Activated CD8-positive, alpha-beta T cell treated with anti-CD3 and anti-CD28 coated beads for 36 hours (primary cell): ENCODE measurements at regions of chr2 and their contacts with region 1.

Region 1: GRCh38 chr2:106572541-106573450 is 85.6 kb downstream of the CD8B2 start:
- DNase-seq: peak; percentile 53
- ATAC-seq: peak; percentile 60
- H3K4me3 Mint-ChIP-seq: no peak overlapping the region
- H3K27ac Mint-ChIP-seq: no peak overlapping the region
- H3K4me1 Mint-ChIP-seq: no peaks in the 10 kb centered on the region
- H3K27me3 Mint-ChIP-seq: peaks cover 5% of the 10 kb centered on the region
- CTCF ChIP-seq: peak; percentile 71

Region 2: GRCh38 chr2:106098081-106098480 is 474.7 kb before region 1 on chr2:
- CTCF ChIA-PET with region 1: no interaction called
- POLR2A ChIA-PET with region 1: no interaction called
- intact Hi-C with region 1: loop called (anchors 10 kb)
- DNase-seq: peak; percentile 57
- ATAC-seq: no peak
- H3K4me3 Mint-ChIP-seq: no peak overlapping the region
- H3K27ac Mint-ChIP-seq: peak overlapping the region; percentile 21
- H3K4me1 Mint-ChIP-seq: peaks cover 43% of the 10 kb centered on the region
- H3K27me3 Mint-ChIP-seq: no peaks in the 10 kb centered on the region
- CTCF ChIP-seq: peak; percentile 46

Region 3: GRCh38 chr2:106523976-106524665 is 48.7 kb before region 1 on chr2:
- CTCF ChIA-PET with region 1: no interaction called
- POLR2A ChIA-PET with region 1: no interaction called
- intact Hi-C with region 1: no loop called
- DNase-seq: no peak
- ATAC-seq: no peak
- H3K4me3 Mint-ChIP-seq: no peak overlapping the region
- H3K27ac Mint-ChIP-seq: no peak overlapping the region
- H3K4me1 Mint-ChIP-seq: no peaks in the 10 kb centered on the region
- H3K27me3 Mint-ChIP-seq: peaks cover 5% of the 10 kb centered on the region
- CTCF ChIP-seq: no peak

Region 4: DNA sequence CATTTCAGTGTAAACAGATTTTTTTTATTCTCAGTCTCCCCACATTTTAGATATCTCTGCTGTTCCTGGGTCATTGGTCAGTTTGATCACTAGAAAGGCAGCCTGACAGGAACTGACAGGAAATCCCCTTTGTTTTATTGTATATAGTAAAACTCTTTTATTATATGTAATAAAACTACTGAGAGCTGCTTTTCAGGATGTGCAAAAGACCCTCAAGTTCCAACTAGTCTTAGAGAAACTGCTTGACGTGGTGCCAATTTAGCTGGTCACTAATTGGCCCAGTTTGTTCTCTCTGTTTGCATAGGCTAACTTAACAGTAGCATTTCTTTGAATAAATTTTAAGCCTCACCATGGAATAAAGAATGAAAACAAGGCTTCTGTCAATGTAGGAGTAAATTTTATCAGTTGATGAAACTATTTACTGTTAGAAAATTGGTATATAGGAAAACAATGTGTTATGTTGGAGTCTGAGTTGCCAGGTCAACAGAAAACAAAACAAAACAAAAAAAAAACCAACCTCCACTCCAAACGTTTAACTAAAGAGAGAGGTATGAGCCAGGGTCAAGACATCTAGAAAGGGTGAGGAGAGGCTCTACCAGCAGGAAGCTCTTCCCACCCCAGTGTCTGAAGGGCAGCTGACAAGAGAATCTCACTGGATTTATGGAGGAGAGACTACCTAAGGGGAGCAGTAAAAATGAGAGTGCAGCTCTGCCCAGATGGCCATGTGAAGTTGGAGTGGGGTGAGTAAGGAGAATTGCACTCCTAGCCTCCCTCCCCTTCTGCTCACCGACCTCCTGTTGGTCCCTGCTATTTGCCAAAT is 128.6 kb after region 1 on chr2:
- CTCF ChIA-PET with region 1: no interaction called
- POLR2A ChIA-PET with region 1: no interaction called
- intact Hi-C with region 1: no loop called
- DNase-seq: no peak
- ATAC-seq: no peak
- H3K4me3 Mint-ChIP-seq: no peak overlapping the region
- H3K27ac Mint-ChIP-seq: no peak overlapping the region
- H3K4me1 Mint-ChIP-seq: no peaks in the 10 kb centered on the region
- H3K27me3 Mint-ChIP-seq: no peaks in the 10 kb centered on the region
- CTCF ChIP-seq: no peak